ENCODE measurements at regions of chr2 and their contacts with region 1.

Region 1: DNA sequence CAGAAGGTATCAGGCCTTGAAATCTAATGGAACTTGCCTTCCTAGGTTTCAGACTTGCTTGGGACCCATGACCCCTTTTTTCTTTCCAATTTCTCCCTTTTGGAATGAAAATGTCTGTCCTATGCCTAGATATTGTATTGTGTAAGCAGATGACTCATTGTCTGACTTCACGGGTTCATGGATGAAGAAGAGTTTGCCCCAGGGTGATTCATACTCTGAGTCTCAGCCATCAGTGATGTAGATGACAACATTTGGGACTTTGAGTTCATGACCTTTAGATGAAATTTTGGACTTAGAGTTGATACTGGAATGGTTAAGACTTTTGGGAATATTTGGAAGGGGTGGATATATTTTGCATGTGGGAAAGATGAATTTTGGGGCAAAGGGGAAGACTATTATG is 11.2 kb upstream of the SCYGR5 start:
- DNase-seq: peak; percentile 20 to 75 (median 57)
- H3K4me3 ChIP-seq: no peak overlapping the region
- H3K4me3 Mint-ChIP-seq: no peak overlapping the region
- H3K27ac ChIP-seq: no peak overlapping the region
- H3K27ac Mint-ChIP-seq: no peak overlapping the region
- H3K4me1 ChIP-seq: no peaks in the 10 kb centered on the region
- H3K4me1 Mint-ChIP-seq: peaks cover 2% of the 10 kb centered on the region
- H3K27me3 ChIP-seq: no peaks in the 10 kb centered on the region
- H3K27me3 Mint-ChIP-seq: peaks cover 3 to 17% (median 6%) of the 10 kb centered on the region in 3 donors
- CTCF ChIP-seq: no peak

Region 2: GRCh38 chr2:227545990-227546389 is 109.5 kb before region 1 on chr2:
- intact Hi-C with region 1: no loop called
- DNase-seq: no peak
- H3K4me3 ChIP-seq: no peak overlapping the region
- H3K4me3 Mint-ChIP-seq: no peak overlapping the region
- H3K27ac ChIP-seq: no peak overlapping the region
- H3K27ac Mint-ChIP-seq: peak overlapping the region in 1 of 7 donors; percentile 6
- H3K4me1 ChIP-seq: no peaks in the 10 kb centered on the region
- H3K4me1 Mint-ChIP-seq: peaks cover 4% of the 10 kb centered on the region
- H3K27me3 ChIP-seq: no peaks in the 10 kb centered on the region
- H3K27me3 Mint-ChIP-seq: no peaks in the 10 kb centered on the region
- CTCF ChIP-seq: peak; percentile 47

Region 3: GRCh38 chr2:227862227-227862740 is 206.8 kb after region 1 on chr2:
- intact Hi-C with region 1: loop called (anchors 5 to 10 kb)
- DNase-seq: peak; percentile 40 to 71 (median 63)
- H3K4me3 ChIP-seq: no peak overlapping the region
- H3K4me3 Mint-ChIP-seq: no peak overlapping the region
- H3K27ac ChIP-seq: no peak overlapping the region
- H3K27ac Mint-ChIP-seq: no peak overlapping the region
- H3K4me1 ChIP-seq: peaks cover 3 to 4% of the 10 kb centered on the region in 2 donors
- H3K4me1 Mint-ChIP-seq: peaks cover 7% of the 10 kb centered on the region
- H3K27me3 ChIP-seq: no peaks in the 10 kb centered on the region
- H3K27me3 Mint-ChIP-seq: peaks cover 4 to 12% (median 8%) of the 10 kb centered on the region in 3 donors
- CTCF ChIP-seq: peak; percentile 89

Measured in CD14-positive monocyte (primary cell).